SK-N-SH (cell line): ENCODE measurements at regions of chr18 and their contacts with region 1.

Region 1: GRCh38 chr18:2948038-2948437 is 64.9 kb downstream of the LPIN2 start:
- DNase-seq: peak; percentile 19
- H3K4me3 ChIP-seq: no peak overlapping the region
- H3K27ac ChIP-seq: no peak overlapping the region
- H3K4me1 ChIP-seq: no peaks in the 10 kb centered on the region; a peak in 1 of 4 replicates
- H3K27me3 ChIP-seq: no peaks in the 10 kb centered on the region
- CTCF ChIP-seq: peak; percentile 58
- EP300 ChIP-seq: no peak
- RAD21 ChIP-seq: peak; percentile 40

Region 2: GRCh38 chr18:2889761-2890192 is 58.3 kb before region 1 on chr18:
- CTCF ChIA-PET with region 1: no interaction called
- POLR2A ChIA-PET with region 1: no interaction called
- DNase-seq: no peak
- H3K4me3 ChIP-seq: no peak overlapping the region
- H3K27ac ChIP-seq: no peak overlapping the region
- H3K4me1 ChIP-seq: no peaks in the 10 kb centered on the region
- H3K27me3 ChIP-seq: peaks cover 4% of the 10 kb centered on the region; the same call in 1 of the 2 replicates
- CTCF ChIP-seq: no peak
- EP300 ChIP-seq: no peak
- RAD21 ChIP-seq: no peak

Region 3: GRCh38 chr18:2932247-2933181 is 15.5 kb before region 1 on chr18:
- CTCF ChIA-PET with region 1: interaction called, 20 read pairs
- POLR2A ChIA-PET with region 1: no interaction called
- DNase-seq: peak; percentile 64
- H3K4me3 ChIP-seq: no peak overlapping the region; a peak in 1 of 4 replicates
- H3K27ac ChIP-seq: no peak overlapping the region; a peak in 1 of 4 replicates
- H3K4me1 ChIP-seq: no peaks in the 10 kb centered on the region; a peak in 1 of 4 replicates
- H3K27me3 ChIP-seq: no peaks in the 10 kb centered on the region
- CTCF ChIP-seq: peak; percentile 86
- EP300 ChIP-seq: no peak
- RAD21 ChIP-seq: peak; percentile 89